Panc1 (cell line): ENCODE measurements at regions of chr5 and their contacts with region 1.

Region 1: GRCh38 chr5:8457187-8458037 is 588.5 kb downstream of the MTRR start:
- DNase-seq: peak; percentile 96
- ATAC-seq: peak; percentile 99
- H3K4me3 ChIP-seq: peak overlapping the region; percentile 75 to 97
- H3K27ac ChIP-seq: peak overlapping the region; percentile 92
- H3K4me1 ChIP-seq: peaks cover 14% of the 10 kb centered on the region
- H3K27me3 ChIP-seq: no peaks in the 10 kb centered on the region
- CTCF ChIP-seq: no peak

Region 2: GRCh38 chr5:7868773-7869473 is 588.5 kb before region 1 on chr5 and contains the starts of genes FASTKD3 and MTRR:
- CTCF ChIA-PET with region 1: no interaction called
- POLR2A ChIA-PET with region 1: no interaction called
- in situ Hi-C with region 1: no loop called
- intact Hi-C with region 1: no loop called
- DNase-seq: peak; percentile 73
- ATAC-seq: peak; percentile 100
- H3K4me3 ChIP-seq: peak within 1 kb of the TSS; percentile 73 to 80
- H3K27ac ChIP-seq: peak within 1 kb of the TSS; percentile 94
- H3K4me1 ChIP-seq: peaks cover 25% of the 10 kb centered on the region
- H3K27me3 ChIP-seq: no peaks in the 10 kb centered on the region
- CTCF ChIP-seq: no peak
- total RNA-seq, gene FASTKD3: 9.9 TPM
- total RNA-seq, gene MTRR: 57.8 TPM

Region 3: DNA sequence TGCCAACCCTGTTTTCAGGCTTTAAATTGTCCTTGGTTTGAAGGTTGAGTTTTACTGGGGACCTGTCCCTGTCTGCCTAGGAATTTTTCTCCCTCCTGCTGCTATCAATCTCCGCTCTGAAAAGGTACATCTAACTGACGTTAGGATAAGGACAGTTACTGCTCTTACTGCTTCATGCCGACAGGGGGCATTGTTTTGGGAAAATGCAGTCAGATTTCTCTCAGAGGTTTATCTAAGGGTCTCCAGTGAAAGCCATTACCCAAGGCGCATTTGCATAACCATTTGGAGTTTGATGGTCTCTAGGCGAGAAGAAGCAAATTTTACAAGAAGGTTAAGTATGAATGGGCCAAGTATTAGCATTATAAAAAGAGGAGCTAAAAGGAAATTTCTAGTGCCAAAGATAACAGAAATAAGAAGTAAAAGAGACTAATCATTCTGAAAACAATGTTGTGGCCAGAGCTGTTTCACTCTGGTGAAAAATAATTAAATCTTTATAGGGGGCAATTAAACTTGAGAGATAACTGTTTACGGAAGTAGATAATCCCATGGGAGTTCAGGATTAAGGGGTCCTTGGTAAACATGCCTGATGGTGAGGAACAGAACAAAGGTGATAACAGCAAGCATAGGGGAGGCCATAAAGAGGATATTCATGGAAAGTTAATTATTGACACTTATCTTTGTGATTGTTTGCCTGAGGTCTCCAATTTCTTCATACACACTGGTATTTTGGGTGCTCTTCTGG is 16.6 kb after region 1 on chr5:
- CTCF ChIA-PET with region 1: no interaction called
- POLR2A ChIA-PET with region 1: interaction called, 10 read pairs
- in situ Hi-C with region 1: no loop called
- intact Hi-C with region 1: no loop called
- DNase-seq: no peak
- ATAC-seq: no peak
- H3K4me3 ChIP-seq: no peak overlapping the region
- H3K27ac ChIP-seq: no peak overlapping the region
- H3K4me1 ChIP-seq: no peaks in the 10 kb centered on the region
- H3K27me3 ChIP-seq: no peaks in the 10 kb centered on the region
- CTCF ChIP-seq: peak; percentile 25